ENCODE measurements at regions of chr1 and their contacts with region 1.

Region 1: DNA sequence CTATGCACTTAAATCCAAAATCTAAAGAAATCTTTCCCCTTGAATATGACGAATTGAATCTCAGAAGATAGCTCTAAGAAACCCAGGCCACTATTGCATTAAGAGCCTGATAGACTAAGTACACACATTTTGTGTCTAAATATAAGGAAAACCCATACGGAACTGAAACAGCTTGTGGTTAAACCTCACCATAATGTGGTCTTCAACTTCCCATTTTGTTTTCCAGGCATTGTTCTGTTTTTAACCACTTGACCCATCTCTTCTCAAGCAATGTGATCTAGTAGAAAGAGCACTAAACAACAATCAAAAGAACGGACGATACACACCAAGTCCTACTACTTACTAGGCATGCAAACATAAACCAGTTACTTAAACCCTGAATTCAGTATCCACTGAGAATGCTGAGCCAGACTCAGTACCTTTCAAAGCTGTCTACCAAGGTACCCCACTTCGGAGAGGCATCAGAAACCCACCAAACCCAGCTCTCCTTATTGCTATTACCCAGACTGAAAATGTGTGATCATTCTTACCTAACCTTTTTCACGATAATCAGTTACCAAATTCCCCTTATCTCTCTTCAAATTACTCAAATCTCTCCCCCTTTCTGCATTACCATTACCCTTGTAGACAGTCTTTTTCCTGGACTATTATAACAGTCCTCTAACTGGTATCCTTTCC is 12.8 kb downstream of the OTUD7B start:
- DNase-seq: no peak
- H3K4me3 Mint-ChIP-seq: peak overlapping the region; percentile 6
- H3K27ac Mint-ChIP-seq: peak overlapping the region; percentile 65
- H3K4me1 Mint-ChIP-seq: peaks cover 52% of the 10 kb centered on the region
- H3K27me3 Mint-ChIP-seq: peaks cover 2% of the 10 kb centered on the region

Region 2: GRCh38 chr1:149937060-149937705 is 60.5 kb before region 1 on chr1:
- intact Hi-C with region 1: loop called (anchors 2 kb)
- DNase-seq: no peak
- H3K4me3 Mint-ChIP-seq: peak overlapping the region; percentile 56
- H3K27ac Mint-ChIP-seq: peak overlapping the region; percentile 78
- H3K4me1 Mint-ChIP-seq: peaks cover 28% of the 10 kb centered on the region
- H3K27me3 Mint-ChIP-seq: no peaks in the 10 kb centered on the region

Region 3: GRCh38 chr1:150067184-150068036 is 69.7 kb after region 1 on chr1 and contains the start of gene VPS45:
- intact Hi-C with region 1: loop called (anchors 5 kb)
- DNase-seq: peak; percentile 83
- H3K4me3 Mint-ChIP-seq: peak within 1 kb of the TSS; percentile 97
- H3K27ac Mint-ChIP-seq: peak within 1 kb of the TSS; percentile 98
- H3K4me1 Mint-ChIP-seq: peaks cover 45% of the 10 kb centered on the region
- H3K27me3 Mint-ChIP-seq: peaks cover 5% of the 10 kb centered on the region
- total RNA-seq, gene VPS45: 25.9 and 30.2 TPM in 2 replicates

Region 4: DNA sequence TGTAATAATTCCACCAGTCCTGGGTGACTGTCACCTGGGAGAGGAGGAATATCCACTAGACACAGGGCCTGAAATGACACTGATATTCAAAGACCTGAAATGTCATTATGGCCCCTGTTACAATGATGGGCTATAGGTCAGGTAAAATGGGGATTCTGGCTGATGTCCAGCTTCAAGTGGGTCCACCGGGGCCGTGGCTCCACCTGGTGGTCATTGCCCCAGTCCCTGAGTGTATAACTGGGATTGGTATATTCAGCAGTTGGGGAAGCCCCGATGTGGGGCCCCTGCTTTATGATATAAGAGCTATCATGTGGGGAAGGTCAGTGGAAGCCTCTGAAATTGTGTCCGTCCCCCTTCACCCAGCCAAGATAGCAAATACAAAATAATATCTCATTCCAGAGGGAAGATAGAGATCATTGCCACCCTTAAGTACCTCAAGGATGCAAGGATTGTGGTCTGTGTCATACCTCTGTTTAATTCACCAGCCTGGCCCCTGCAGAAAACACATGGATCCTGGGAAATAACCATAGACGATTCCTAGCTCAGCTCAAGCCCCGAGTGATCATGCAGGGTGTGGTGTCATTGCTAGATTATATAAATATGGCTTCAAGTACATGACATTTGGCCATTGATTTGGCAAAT is 171.4 kb after region 1 on chr1:
- intact Hi-C with region 1: no loop called
- DNase-seq: peak; percentile 28
- H3K4me3 Mint-ChIP-seq: no peak overlapping the region
- H3K27ac Mint-ChIP-seq: no peak overlapping the region
- H3K4me1 Mint-ChIP-seq: no peaks in the 10 kb centered on the region
- H3K27me3 Mint-ChIP-seq: peaks cover 11% of the 10 kb centered on the region

Region 5: GRCh38 chr1:150352866-150353265 is 355.1 kb after region 1 on chr1:
- intact Hi-C with region 1: no loop called
- DNase-seq: no peak
- H3K4me3 Mint-ChIP-seq: no peak overlapping the region
- H3K27ac Mint-ChIP-seq: no peak overlapping the region
- H3K4me1 Mint-ChIP-seq: no peaks in the 10 kb centered on the region
- H3K27me3 Mint-ChIP-seq: no peaks in the 10 kb centered on the region